T-cell (primary cell): ENCODE measurements at regions of chr2 and their contacts with region 1.

Region 1: GRCh38 chr2:152606081-152606480 is 111.2 kb downstream of the PRPF40A start:
- DNase-seq: no peak
- ATAC-seq: no peak
- H3K4me3 ChIP-seq: no peak overlapping the region
- H3K4me3 Mint-ChIP-seq: no peak overlapping the region
- H3K27ac ChIP-seq: no peak overlapping the region
- H3K27ac Mint-ChIP-seq: no peak overlapping the region
- H3K4me1 ChIP-seq: no peaks in the 10 kb centered on the region
- H3K4me1 Mint-ChIP-seq: peaks cover 0 to 4% (median 2%) of the 10 kb centered on the region in 3 donors
- H3K27me3 ChIP-seq: no peaks in the 10 kb centered on the region
- H3K27me3 Mint-ChIP-seq: no peaks in the 10 kb centered on the region

Region 2: GRCh38 chr2:152354909-152355308 is 251.2 kb before region 1 on chr2:
- CTCF ChIA-PET with region 1: no interaction called
- POLR2A ChIA-PET with region 1: no interaction called
- DNase-seq: no peak
- ATAC-seq: no peak
- H3K4me3 ChIP-seq: no peak overlapping the region
- H3K4me3 Mint-ChIP-seq: no peak overlapping the region
- H3K27ac ChIP-seq: no peak overlapping the region
- H3K27ac Mint-ChIP-seq: no peak overlapping the region
- H3K4me1 ChIP-seq: no peaks in the 10 kb centered on the region
- H3K4me1 Mint-ChIP-seq: no peaks in the 10 kb centered on the region
- H3K27me3 ChIP-seq: no peaks in the 10 kb centered on the region
- H3K27me3 Mint-ChIP-seq: peaks cover 0 to 3% of the 10 kb centered on the region in 2 donors

Region 3: DNA sequence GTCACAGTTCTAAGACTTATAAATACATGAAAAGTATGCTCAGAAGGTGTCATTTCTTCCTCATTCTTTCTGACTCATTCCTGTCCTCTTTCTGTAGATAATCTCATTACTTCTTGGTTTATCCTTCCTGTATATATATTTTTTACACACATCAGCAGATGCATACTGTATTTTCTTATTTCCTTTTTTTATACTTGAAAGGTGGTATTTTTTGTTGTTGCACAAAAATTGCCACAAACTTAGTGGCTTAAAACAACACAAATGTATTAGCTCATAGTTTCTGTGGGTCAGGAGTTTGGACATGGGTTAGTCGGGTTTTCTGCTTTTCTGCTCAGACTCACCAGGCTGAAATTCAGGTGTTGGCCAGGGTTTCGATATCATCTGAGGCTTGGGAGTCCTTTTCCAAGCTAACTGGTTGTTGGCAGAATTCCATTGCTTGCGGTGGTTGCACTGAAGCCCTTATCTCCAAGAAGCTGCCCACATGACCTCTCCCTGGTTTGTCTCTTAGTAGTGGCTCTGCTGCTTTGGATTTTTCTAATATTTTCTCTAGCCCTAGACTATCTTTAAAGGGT is 108.5 kb before region 1 on chr2:
- CTCF ChIA-PET with region 1: no interaction called
- POLR2A ChIA-PET with region 1: no interaction called
- DNase-seq: no peak
- ATAC-seq: no peak
- H3K4me3 ChIP-seq: no peak overlapping the region
- H3K4me3 Mint-ChIP-seq: no peak overlapping the region
- H3K27ac ChIP-seq: no peak overlapping the region
- H3K27ac Mint-ChIP-seq: no peak overlapping the region
- H3K4me1 ChIP-seq: no peaks in the 10 kb centered on the region
- H3K4me1 Mint-ChIP-seq: no peaks in the 10 kb centered on the region
- H3K27me3 ChIP-seq: peaks cover 0 to 2% of the 10 kb centered on the region in 2 experiments
- H3K27me3 Mint-ChIP-seq: peaks cover 11 to 13% of the 10 kb centered on the region in 2 donors

Region 4: DNA sequence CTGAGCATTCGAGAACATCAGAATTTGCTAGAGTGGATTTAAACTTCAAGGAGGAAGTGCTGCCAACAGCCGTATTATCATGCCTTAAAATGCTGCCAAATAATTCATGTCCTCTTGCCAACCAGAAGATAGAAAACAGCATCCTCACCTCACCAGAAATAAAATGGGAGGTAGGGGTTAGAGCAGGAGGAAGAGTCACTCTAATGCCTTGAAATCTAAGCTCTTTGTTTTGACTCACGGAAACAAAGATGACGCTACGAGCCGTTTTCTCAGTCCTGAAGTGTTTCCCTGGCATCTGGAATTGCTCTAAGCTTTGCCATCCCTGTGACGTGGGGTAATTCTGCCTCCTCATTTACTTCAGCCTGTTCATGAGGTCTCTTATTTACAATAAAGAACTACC is 14.1 kb after region 1 on chr2:
- CTCF ChIA-PET with region 1: interaction called, 3 read pairs
- POLR2A ChIA-PET with region 1: interaction called in 1 of 2 experiments, 14 read pairs
- DNase-seq: no peak
- ATAC-seq: no peak
- H3K4me3 ChIP-seq: no peak overlapping the region
- H3K4me3 Mint-ChIP-seq: no peak overlapping the region
- H3K27ac ChIP-seq: no peak overlapping the region
- H3K27ac Mint-ChIP-seq: no peak overlapping the region
- H3K4me1 ChIP-seq: no peaks in the 10 kb centered on the region
- H3K4me1 Mint-ChIP-seq: no peaks in the 10 kb centered on the region
- H3K27me3 ChIP-seq: peaks cover 0 to 5% of the 10 kb centered on the region in 2 experiments
- H3K27me3 Mint-ChIP-seq: peaks cover 3 to 15% of the 10 kb centered on the region in 2 donors